Thyroid gland (tissue), 4 donors: ENCODE measurements at regions of chr7 and their contacts with region 1.

Region 1: DNA sequence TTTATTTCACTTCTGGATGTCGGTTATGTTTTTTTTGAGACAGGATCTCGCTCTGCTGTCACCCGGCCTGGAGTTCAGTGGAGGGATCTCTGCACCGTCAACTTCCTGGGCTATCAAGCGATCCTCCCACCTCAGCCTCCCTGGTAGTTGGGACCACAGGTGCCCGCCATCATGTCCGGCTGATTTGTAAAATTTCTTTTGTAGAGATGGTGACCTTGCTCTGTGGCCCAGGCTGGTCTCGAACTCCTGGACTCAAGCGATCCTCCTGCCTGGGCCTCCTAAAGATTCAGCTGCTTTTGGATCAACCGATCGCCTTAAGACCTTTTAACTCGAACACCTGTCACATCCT is 606 bp upstream of the RABGEF1 start:
- DNase-seq: no peak
- H3K4me3 ChIP-seq: peak overlapping the region; percentile 73 to 99 (median 90)
- H3K27ac ChIP-seq: peak overlapping the region; percentile 95 to 99 (median 95)
- H3K4me1 ChIP-seq: peaks cover 13 to 18% of the 10 kb centered on the region in 2 donors
- H3K27me3 ChIP-seq: no peaks in the 10 kb centered on the region
- CTCF ChIP-seq: no peak
- POLR2A ChIP-seq: no peak

Region 2: GRCh38 chr7:66681491-66682349 is 58.2 kb before region 1 on chr7:
- intact Hi-C with region 1: loop called (anchors 10 kb)
- DNase-seq: peak; percentile 97
- H3K4me3 ChIP-seq: peak overlapping the region; percentile 21 to 99 (median 88)
- H3K27ac ChIP-seq: peak overlapping the region; percentile 96 to 99 (median 98)
- H3K4me1 ChIP-seq: peaks cover 6 to 18% of the 10 kb centered on the region in 2 donors
- H3K27me3 ChIP-seq: no peaks in the 10 kb centered on the region
- CTCF ChIP-seq: no peak
- POLR2A ChIP-seq: peak; percentile 16 to 94